ENCODE measurements at regions of chr9 and their contacts with region 1.

Region 1: DNA sequence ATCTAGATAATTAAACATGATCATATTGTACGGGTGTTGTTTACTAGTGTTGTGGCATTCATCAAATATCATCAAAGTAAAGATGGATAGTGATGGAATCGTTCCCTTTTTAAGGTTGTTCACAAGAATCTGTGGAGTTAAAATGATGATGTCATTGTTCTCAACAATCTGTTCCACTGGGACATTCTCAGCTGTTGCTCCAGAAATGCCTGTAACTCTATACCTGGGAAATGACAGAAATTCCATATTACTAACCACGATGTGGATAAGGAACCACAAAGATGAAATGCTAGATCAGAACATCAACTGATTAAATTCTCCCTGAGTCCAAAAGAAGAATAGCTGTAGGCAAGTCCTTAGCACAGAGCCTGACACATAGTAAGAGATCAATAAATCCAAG is 38.0 kb downstream of the RIGI start:
- DNase-seq: no peak
- ATAC-seq: no peak
- H3K4me3 ChIP-seq: no peak overlapping the region
- H3K27ac ChIP-seq: no peak overlapping the region
- H3K4me1 ChIP-seq: no peaks in the 10 kb centered on the region
- H3K27me3 ChIP-seq: no peaks in the 10 kb centered on the region
- CTCF ChIP-seq: no peak
- POLR2A ChIP-seq: no peak

Region 2: DNA sequence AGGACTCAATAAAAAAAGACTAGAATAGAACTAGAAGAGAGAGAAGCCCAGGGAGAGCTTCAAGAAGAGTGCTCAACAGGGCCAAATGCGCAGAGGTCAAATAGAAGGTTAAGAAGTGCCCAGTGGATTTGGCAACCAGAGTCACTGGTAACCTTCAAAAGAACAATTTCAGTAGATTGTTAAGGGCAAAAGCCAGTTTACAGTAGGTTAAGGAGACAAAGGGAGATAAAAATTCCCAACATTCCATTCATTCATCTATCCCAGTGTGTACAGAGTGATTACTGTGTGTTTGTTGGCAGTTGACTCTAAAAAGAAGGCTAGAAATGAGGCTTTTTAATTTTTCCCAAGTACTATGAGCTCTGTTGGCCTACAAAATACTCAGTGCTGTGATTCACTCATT is 31.4 kb before region 1 on chr9:
- intact Hi-C with region 1: loop called in 1 of 10 experiments (anchors 5 kb)
- DNase-seq: no peak
- ATAC-seq: no peak
- H3K4me3 ChIP-seq: no peak overlapping the region
- H3K27ac ChIP-seq: no peak overlapping the region
- H3K4me1 ChIP-seq: peaks cover 0 to 12% (median 0%) of the 10 kb centered on the region in 12 donors
- H3K27me3 ChIP-seq: no peaks in the 10 kb centered on the region
- CTCF ChIP-seq: no peak
- POLR2A ChIP-seq: no peak

Region 3: GRCh38 chr9:32516241-32516640 is 28.3 kb after region 1 on chr9:
- intact Hi-C with region 1: loop called in 1 of 10 experiments (anchors 2 kb)
- DNase-seq: no peak
- ATAC-seq: no peak
- H3K4me3 ChIP-seq: no peak overlapping the region
- H3K27ac ChIP-seq: no peak overlapping the region
- H3K4me1 ChIP-seq: peaks cover 0 to 9% (median 0%) of the 10 kb centered on the region in 12 donors
- H3K27me3 ChIP-seq: no peaks in the 10 kb centered on the region
- CTCF ChIP-seq: no peak
- POLR2A ChIP-seq: no peak

Region 4: DNA sequence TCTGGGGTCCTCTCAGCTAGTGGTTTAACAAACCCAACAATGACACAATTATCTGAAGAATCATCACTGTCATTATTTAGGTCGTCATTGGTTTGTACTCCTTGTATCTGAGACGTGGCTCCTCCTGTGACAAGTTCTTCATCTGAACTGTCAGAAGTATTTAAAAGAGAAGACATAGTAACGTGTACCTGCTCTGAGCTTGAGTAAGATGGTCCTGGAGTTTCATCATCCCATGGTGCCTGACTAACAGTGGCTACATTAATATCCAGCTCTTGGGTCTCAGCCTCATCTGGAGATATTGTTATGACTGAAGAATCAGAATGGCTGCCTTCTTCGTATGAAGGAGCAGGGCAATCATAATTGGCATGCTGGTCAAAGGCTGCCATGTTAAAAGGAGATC is 55.1 kb after region 1 on chr9:
- intact Hi-C with region 1: loop called in 1 of 10 experiments (anchors 10 kb)
- DNase-seq: no peak
- ATAC-seq: no peak
- H3K4me3 ChIP-seq: no peak overlapping the region
- H3K27ac ChIP-seq: no peak overlapping the region
- H3K4me1 ChIP-seq: peaks cover 0 to 8% (median 0%) of the 10 kb centered on the region in 12 donors
- H3K27me3 ChIP-seq: no peaks in the 10 kb centered on the region
- CTCF ChIP-seq: no peak
- POLR2A ChIP-seq: no peak

Measured in heart left ventricle (tissue), 16 donors.